Activated T-helper 1 cell treated with anti-CD3 and anti-CD28 coated beads, Interleukin-12 subunit alpha, Interleukin-12 subunit beta, Interleukin-2, Interleukin-4 antibody, amounts not matched to agents 30 ng/mL and 10 ng/mL and 1 ng/mL, durations not matched to agents 14 hours and 24 hours and 36 hours (primary cell): ENCODE measurements at regions of chr1 and their contacts with region 1.

Region 1: DNA sequence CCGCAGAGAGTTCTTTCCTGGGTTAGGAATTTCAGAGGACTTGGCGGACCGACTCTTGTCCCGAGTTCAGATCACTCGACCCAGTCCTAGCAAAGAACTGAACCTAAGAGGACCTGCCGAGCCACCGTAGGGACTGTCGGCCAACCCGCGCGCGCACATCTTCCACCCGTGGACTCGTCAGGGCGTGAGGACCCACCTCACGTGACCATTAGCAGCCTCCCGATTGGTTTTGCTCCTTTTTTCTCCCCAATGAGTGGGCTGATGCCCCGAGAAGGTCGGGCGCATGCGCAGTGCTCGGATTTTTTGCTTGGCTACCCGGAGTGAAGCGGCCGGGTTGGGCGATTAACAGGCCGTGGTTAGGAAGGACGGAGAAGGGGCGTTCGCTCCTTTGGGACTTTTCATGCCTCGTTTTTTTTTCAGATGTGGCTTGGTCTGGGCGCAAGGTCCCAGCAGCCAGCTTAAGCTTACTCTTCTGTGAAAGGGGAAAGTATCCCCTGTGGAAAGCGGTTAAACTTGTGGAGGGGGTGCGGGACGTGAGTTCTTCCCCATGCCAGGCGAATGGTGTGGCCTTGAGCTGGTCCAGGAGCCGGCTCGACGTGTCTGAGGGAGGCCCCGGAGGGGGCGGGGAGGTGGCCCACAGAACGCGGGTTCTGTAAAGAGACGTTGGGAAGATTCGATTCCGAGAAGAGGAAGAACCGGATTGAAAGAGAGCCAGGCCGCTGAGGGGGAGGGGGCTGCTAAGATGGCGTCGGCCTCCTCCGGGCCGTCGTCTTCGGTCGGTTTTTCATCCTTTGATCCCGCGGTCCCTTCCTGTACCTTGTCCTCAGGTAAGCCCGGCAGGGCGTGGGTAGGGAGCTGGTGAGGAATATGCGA is at the start of gene PIP5K1A:
- DNase-seq: peak; percentile 97
- H3K4me3 Mint-ChIP-seq: peak within 1 kb of the TSS; percentile 94
- H3K27ac Mint-ChIP-seq: peak within 1 kb of the TSS; percentile 94
- H3K4me1 Mint-ChIP-seq: peaks cover 35% of the 10 kb centered on the region
- H3K27me3 Mint-ChIP-seq: peaks cover 7% of the 10 kb centered on the region
- total RNA-seq, gene PIP5K1A: 98.9 and 101 TPM in 2 replicates

Region 2: GRCh38 chr1:151165738-151166505 is 32.6 kb before region 1 on chr1 and contains the starts of genes LYSMD1 and SCNM1:
- intact Hi-C with region 1: loop called (anchors 1 kb)
- DNase-seq: peak; percentile 96
- H3K4me3 Mint-ChIP-seq: peak within 1 kb of the TSS; percentile 95
- H3K27ac Mint-ChIP-seq: peak within 1 kb of the TSS; percentile 97
- H3K4me1 Mint-ChIP-seq: peaks cover 53% of the 10 kb centered on the region
- H3K27me3 Mint-ChIP-seq: peaks cover 2% of the 10 kb centered on the region
- total RNA-seq, gene LYSMD1: 4.0 and 5.0 TPM in 2 replicates
- total RNA-seq, gene SCNM1: 111 and 117 TPM in 2 replicates

Region 3: DNA sequence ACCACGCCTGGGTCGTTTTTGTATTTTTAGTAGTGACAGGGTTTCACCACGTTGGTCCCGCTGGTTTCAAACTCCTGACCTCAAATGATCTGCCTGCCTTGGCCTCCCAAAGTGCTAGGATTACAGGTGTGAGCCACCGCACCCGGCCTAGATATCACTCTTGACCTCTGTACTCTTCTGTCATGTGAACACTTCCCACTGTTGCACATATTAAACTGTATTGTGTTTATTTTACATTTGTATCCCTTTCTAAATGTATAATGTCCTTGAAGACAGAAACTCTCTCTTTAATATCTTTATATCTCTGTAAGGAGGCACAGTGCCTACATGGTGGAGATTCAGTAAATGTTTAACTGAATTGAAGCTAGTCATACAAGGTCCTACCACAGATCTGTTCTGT is 36.7 kb after region 1 on chr1:
- intact Hi-C with region 1: no loop called
- DNase-seq: no peak
- H3K4me3 Mint-ChIP-seq: no peak overlapping the region
- H3K27ac Mint-ChIP-seq: no peak overlapping the region
- H3K4me1 Mint-ChIP-seq: peaks cover 10% of the 10 kb centered on the region
- H3K27me3 Mint-ChIP-seq: no peaks in the 10 kb centered on the region

Region 4: GRCh38 chr1:151254217-151255213 is 56.0 kb after region 1 on chr1 and contains the start of gene PSMD4:
- intact Hi-C with region 1: loop called (anchors 1 kb)
- DNase-seq: peak; percentile 91
- H3K4me3 Mint-ChIP-seq: peak within 1 kb of the TSS; percentile 98
- H3K27ac Mint-ChIP-seq: peak within 1 kb of the TSS; percentile 88
- H3K4me1 Mint-ChIP-seq: peaks cover 17% of the 10 kb centered on the region
- H3K27me3 Mint-ChIP-seq: no peaks in the 10 kb centered on the region
- total RNA-seq, gene PSMD4: 276 and 285 TPM in 2 replicates

Region 5: DNA sequence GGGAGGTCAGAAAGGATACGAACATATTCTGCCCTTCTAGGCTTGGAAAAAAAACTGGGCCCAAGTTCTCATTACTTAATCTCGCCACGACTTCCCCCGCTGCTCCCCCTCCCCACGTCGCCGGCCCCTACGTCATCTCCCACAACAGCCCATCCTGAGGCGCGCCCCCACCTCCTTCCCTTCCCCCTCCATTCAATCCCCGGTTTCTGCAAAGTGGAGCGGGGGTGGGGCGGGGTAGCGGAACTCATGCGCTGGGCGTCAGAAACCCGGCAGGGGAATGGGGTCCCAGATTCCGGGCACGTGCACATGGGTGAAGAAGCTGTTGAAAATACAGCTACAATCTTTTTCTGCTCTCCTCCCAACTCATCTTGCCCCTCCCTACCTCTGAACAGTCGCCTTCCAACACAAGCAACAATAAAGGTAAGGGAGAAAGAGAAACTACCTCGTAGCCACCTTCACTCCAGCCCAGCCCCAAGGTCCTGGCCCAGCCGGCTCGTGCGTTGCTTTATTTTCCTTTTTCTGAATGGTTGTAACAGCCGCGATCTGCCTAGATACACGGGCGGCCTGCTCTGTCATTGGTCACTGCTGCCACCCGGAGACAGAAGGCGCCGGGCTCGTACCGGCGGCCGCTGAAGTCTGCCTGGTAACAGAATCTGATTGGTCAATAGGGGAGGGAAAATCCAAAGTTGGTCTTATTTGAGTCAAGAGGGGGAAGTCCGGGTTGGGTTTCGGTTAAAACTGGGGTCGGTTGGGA is 148.5 kb after region 1 on chr1 and contains the start of gene RFX5:
- intact Hi-C with region 1: loop called (anchors 1 kb)
- DNase-seq: peak; percentile 95
- H3K4me3 Mint-ChIP-seq: peak within 1 kb of the TSS; percentile 95
- H3K27ac Mint-ChIP-seq: peak within 1 kb of the TSS; percentile 99
- H3K4me1 Mint-ChIP-seq: peaks cover 45% of the 10 kb centered on the region
- H3K27me3 Mint-ChIP-seq: no peaks in the 10 kb centered on the region
- total RNA-seq, gene RFX5: 78.1 and 83.4 TPM in 2 replicates